ENCODE measurements at regions of chr4 and their contacts with region 1.

Region 1: DNA sequence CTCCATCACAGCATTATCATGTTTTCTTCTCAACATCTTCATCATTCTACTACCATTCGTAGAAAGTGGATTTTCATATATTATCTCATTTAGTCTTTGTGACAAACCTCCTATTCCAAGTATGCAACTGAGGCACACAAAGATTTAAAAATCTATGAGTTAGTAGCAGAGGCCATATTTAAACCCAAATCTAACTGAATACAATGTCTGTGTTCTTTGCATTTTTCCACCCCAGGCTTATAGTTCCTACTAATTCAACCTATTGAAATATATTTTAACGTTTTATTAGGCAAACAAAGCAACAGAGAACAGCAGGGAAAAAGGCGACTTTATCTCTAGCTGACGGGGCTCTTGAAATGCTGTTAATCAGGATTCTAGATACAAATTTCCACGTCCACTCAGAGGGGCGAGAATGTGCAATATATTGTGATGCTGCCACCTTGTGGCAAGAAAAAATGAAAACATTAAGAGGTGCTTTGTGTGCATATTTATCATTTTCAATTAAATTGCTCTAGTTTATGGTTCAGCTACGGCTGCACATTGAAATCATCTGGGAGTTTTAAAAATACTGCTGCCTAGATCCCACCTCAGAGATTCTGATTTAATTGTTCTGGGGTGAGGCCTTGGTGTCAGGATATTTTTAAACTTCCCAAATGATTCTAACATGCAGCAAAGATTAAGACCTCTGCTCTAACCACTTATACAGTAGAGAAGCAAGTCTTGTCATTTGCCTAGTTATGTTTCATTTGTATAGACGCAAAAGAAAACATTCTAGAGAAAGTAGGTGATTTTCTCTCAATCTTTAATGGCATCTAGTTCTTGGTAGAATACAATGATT is 315.9 kb downstream of the MAPK10 start:
- DNase-seq: no peak
- H3K4me3 ChIP-seq: no peak overlapping the region
- H3K27ac ChIP-seq: no peak overlapping the region
- H3K4me1 ChIP-seq: peaks cover 0 to 5% (median 0%) of the 10 kb centered on the region in 4 donors
- H3K27me3 ChIP-seq: no peaks in the 10 kb centered on the region
- CTCF ChIP-seq: peak; percentile 58 to 64

Region 2: GRCh38 chr4:85084380-85085094 is 959.4 kb before region 1 on chr4:
- intact Hi-C with region 1: loop called (anchors 10 kb)
- DNase-seq: peak in 1 of 2 donors; percentile 38
- H3K4me3 ChIP-seq: no peak overlapping the region
- H3K27ac ChIP-seq: no peak overlapping the region
- H3K4me1 ChIP-seq: no peaks in the 10 kb centered on the region
- H3K27me3 ChIP-seq: no peaks in the 10 kb centered on the region
- CTCF ChIP-seq: peak; percentile 55 to 59

Region 3: DNA sequence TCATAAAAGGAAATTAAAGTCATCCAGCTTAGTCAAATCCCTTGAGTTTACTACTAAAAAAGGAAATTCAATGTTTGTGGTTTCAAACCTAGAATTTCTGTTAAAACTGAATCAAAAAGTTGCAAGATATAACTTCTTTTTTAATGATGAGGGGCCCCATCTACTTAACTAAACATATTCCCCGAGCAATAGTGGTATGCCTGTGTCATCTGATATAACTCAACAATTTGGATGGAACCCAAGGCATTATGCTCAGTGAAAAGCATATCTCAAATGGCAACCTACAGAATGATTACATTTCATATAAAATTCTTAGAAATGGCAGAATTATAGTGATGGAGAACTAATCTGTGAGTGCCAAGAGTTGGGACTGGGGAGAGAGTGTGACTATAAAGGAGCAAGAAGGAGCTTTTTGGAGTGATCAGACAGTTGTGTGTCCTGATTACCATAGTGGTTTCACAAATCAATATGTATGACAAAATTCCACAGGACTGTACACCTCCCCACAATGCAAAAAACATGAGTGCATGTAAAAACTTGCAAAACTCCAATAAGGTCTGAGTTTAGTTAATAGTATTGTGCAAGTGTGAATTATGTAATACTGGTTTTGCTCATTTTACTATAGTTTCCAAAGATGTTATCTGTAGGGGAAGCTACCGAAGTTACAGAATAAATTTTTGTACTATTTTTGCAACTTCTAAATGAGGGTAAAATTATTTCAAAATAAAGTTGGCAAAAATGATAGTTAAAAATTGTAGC is 245.8 kb before region 1 on chr4:
- intact Hi-C with region 1: loop called (anchors 5 kb)
- DNase-seq: no peak
- H3K4me3 ChIP-seq: no peak overlapping the region
- H3K27ac ChIP-seq: no peak overlapping the region
- H3K4me1 ChIP-seq: peaks cover 0 to 35% (median 10%) of the 10 kb centered on the region in 4 donors
- H3K27me3 ChIP-seq: no peaks in the 10 kb centered on the region
- CTCF ChIP-seq: no peak

Region 4: DNA sequence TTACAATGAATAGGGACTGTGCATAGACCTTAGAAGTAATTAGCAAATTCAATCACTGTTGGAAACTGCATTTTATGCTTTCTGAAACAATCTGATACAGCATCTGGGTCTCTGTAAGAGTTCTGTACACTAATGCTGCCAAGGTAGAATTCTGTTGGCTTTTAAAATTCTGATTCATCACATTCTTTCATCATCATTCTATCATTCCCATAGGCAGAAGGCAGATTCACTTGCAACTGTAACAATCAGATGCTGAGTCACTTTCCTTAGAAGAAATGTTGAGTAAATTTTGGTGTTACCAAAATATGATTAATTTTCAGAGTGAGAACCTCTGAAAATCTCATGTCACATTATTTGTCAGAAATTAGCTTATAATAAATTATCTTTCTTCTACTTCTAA is 48.7 kb after region 1 on chr4:
- intact Hi-C with region 1: no loop called
- DNase-seq: no peak
- H3K4me3 ChIP-seq: no peak overlapping the region
- H3K27ac ChIP-seq: no peak overlapping the region
- H3K4me1 ChIP-seq: no peaks in the 10 kb centered on the region
- H3K27me3 ChIP-seq: no peaks in the 10 kb centered on the region
- CTCF ChIP-seq: no peak

Region 5: GRCh38 chr4:86218742-86219481 is 174.9 kb after region 1 on chr4:
- intact Hi-C with region 1: no loop called
- DNase-seq: no peak
- H3K4me3 ChIP-seq: no peak overlapping the region
- H3K27ac ChIP-seq: no peak overlapping the region
- H3K4me1 ChIP-seq: no peaks in the 10 kb centered on the region
- H3K27me3 ChIP-seq: no peaks in the 10 kb centered on the region
- CTCF ChIP-seq: no peak

Measured in tibial artery (tissue), 4 donors.